ENCODE measurements at regions of chr7 and their contacts with region 1.

Region 1: GRCh38 chr7:131391145-131391544 is 63.5 kb downstream of the MKLN1 start:
- DNase-seq: no peak
- H3K4me3 Mint-ChIP-seq: no peak overlapping the region
- H3K27ac Mint-ChIP-seq: no peak overlapping the region
- H3K4me1 Mint-ChIP-seq: no peaks in the 10 kb centered on the region
- H3K27me3 Mint-ChIP-seq: no peaks in the 10 kb centered on the region
- CTCF ChIP-seq: no peak

Region 2: GRCh38 chr7:131431289-131431688 is 40.1 kb after region 1 on chr7:
- CTCF ChIA-PET with region 1: no interaction called
- intact Hi-C with region 1: loop called (anchors 1 kb)
- DNase-seq: no peak
- H3K4me3 Mint-ChIP-seq: no peak overlapping the region
- H3K27ac Mint-ChIP-seq: no peak overlapping the region
- H3K4me1 Mint-ChIP-seq: no peaks in the 10 kb centered on the region
- H3K27me3 Mint-ChIP-seq: no peaks in the 10 kb centered on the region
- CTCF ChIP-seq: no peak

Region 3: GRCh38 chr7:132059141-132059540 is 668.0 kb after region 1 on chr7:
- CTCF ChIA-PET with region 1: no interaction called
- intact Hi-C with region 1: no loop called
- DNase-seq: no peak
- H3K4me3 Mint-ChIP-seq: no peak overlapping the region
- H3K27ac Mint-ChIP-seq: no peak overlapping the region
- H3K4me1 Mint-ChIP-seq: no peaks in the 10 kb centered on the region
- H3K27me3 Mint-ChIP-seq: peaks cover 38% of the 10 kb centered on the region
- CTCF ChIP-seq: no peak